Activated CD8-positive, alpha-beta memory T cell treated with anti-CD3 and anti-CD28 coated beads, Interleukin-2, amount 10 ng/mL, durations not matched to agents 7 days and 5 days (primary cell): ENCODE measurements at regions of chr12 and their contacts with region 1.

Region 1: GRCh38 chr12:30806989-30807694 is 52.4 kb upstream of the CAPRIN2 start:
- DNase-seq: no peak
- ATAC-seq: peak; percentile 76
- H3K4me3 Mint-ChIP-seq: no peak overlapping the region
- H3K27ac Mint-ChIP-seq: no peak overlapping the region
- H3K4me1 Mint-ChIP-seq: no peaks in the 10 kb centered on the region
- H3K27me3 Mint-ChIP-seq: peaks cover 36% of the 10 kb centered on the region

Region 2: GRCh38 chr12:29519585-29520182 is 1287.5 kb before region 1 on chr12:
- CTCF ChIA-PET with region 1: interaction called, 11 read pairs
- DNase-seq: no peak
- ATAC-seq: no peak
- H3K4me3 Mint-ChIP-seq: no peak overlapping the region
- H3K27ac Mint-ChIP-seq: no peak overlapping the region
- H3K4me1 Mint-ChIP-seq: no peaks in the 10 kb centered on the region
- H3K27me3 Mint-ChIP-seq: peaks cover 18% of the 10 kb centered on the region

Region 3: DNA sequence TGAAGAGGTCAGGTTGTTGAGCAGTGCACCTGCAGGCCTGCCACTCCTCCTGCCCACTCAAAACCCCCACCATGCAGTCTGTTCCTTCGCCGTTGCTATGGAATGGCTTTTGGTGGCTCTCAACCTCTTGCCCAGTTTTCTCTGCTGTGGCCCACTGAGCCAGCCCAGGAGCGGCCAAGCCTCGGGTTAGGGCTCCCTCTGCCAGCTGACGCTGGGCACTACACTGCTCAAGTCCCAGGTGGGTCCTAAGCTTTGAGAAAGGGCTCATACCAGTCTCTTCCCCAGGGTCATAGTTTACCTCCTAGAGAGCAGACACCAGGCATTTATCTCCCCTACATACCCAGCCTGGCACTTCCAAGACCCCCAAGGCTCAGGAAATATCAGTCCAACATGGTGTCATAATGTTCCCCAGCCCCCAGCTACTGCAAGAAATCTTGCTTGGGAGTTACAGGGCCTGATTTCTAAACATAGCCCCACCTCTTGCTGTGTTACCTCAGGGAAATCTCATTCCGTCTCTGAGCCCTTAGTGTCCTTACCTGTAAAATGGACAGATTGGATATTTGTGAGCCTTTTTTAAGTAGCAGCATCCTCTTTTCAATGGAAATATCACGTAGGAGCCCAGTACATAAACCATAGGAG is 178.8 kb after region 1 on chr12:
- CTCF ChIA-PET with region 1: no interaction called
- DNase-seq: peak; percentile 42
- ATAC-seq: peak; percentile 56
- H3K4me3 Mint-ChIP-seq: no peak overlapping the region
- H3K27ac Mint-ChIP-seq: no peak overlapping the region
- H3K4me1 Mint-ChIP-seq: peaks cover 2% of the 10 kb centered on the region
- H3K27me3 Mint-ChIP-seq: no peaks in the 10 kb centered on the region